Activated naive CD4-positive, alpha-beta T cell treated with anti-CD3 and anti-CD28 coated beads for 36 hours (primary cell): ENCODE measurements at regions of chr10 and their contacts with region 1.

Region 1: GRCh38 chr10:26464632-26465280 is 26.6 kb downstream of the APBB1IP start:
- DNase-seq: no peak
- H3K4me3 Mint-ChIP-seq: no peak overlapping the region
- H3K27ac Mint-ChIP-seq: peak overlapping the region; percentile 69
- H3K4me1 Mint-ChIP-seq: peaks cover 74% of the 10 kb centered on the region
- H3K27me3 Mint-ChIP-seq: no peaks in the 10 kb centered on the region

Region 2: DNA sequence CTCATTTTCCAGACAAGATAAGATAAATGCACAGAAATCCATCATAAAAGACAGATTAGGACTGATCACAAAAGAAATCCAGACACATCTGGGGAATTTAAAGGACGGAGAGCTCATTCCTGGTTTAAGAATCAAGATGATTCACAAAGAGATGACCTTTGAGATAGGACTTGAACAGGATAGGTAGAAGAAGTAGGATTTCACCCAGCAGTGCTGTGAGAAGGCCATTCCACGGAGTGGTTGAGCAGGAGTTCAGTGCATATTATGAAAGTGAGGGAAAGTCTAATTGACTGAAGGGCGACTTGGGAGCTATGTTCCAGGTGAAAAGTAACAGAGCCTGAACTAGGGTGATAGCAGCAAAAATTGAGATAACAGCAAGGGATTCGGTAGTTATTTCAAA is 174.5 kb before region 1 on chr10:
- CTCF ChIA-PET with region 1: no interaction called
- intact Hi-C with region 1: no loop called
- DNase-seq: no peak
- H3K4me3 Mint-ChIP-seq: no peak overlapping the region
- H3K27ac Mint-ChIP-seq: no peak overlapping the region
- H3K4me1 Mint-ChIP-seq: no peaks in the 10 kb centered on the region
- H3K27me3 Mint-ChIP-seq: peaks cover 2% of the 10 kb centered on the region

Region 3: DNA sequence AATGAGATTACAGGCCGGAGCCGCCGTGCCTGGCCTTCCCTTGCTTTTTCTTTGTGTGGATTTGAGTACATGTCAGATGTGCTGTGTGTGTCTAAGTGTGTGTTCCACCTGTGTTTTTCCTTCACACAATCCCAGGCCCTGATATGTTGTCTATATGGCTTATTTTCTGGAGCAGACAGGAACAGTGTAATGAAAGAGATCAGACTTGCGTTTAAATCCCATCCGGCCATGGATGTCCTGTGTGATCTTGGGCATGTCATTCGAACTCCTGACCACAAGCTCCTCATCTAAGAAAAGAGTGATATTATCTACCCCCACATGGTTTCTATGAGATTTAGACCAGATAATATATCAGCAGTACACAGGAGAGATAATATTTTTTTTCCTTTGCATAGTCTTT is 10.6 kb after region 1 on chr10:
- CTCF ChIA-PET with region 1: interaction called, 5 read pairs
- intact Hi-C with region 1: loop called (anchors 1 kb)
- DNase-seq: no peak
- H3K4me3 Mint-ChIP-seq: peak overlapping the region; percentile 30
- H3K27ac Mint-ChIP-seq: peak overlapping the region; percentile 89
- H3K4me1 Mint-ChIP-seq: peaks cover 76% of the 10 kb centered on the region
- H3K27me3 Mint-ChIP-seq: no peaks in the 10 kb centered on the region

Region 4: DNA sequence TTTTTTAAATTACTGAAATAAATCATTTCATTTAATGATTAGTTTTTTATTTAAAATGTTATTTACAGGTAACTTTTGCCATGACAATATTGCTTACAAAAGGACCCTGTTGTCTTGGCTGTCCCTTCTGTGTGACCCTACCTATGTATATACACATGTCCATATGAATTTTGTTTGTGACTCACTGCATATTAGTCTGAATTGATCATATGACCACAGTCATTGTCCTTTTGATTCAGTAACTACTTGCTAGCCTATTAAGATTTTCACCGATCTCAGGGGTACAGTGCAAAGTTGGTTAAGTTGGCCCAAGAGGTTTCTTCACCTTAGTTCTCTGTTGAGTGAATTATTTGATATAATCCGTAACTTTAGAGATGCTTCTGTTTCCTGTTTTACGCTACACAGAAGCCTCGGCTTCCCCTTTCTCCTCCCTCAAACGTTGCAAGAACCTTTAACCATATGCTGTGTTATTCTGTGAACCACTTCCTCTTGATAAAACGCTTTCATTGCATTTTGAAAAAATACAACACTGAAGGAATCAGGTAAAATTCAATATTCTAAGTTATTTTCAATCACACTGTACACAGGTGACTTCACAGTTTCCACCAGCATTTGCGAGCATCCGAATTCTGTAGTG is 17.3 kb after region 1 on chr10:
- CTCF ChIA-PET with region 1: interaction called, 5 read pairs
- intact Hi-C with region 1: loop called (anchors 1 kb)
- DNase-seq: peak; percentile 48
- H3K4me3 Mint-ChIP-seq: peak overlapping the region; percentile 69
- H3K27ac Mint-ChIP-seq: peak overlapping the region; percentile 92
- H3K4me1 Mint-ChIP-seq: peaks cover 75% of the 10 kb centered on the region
- H3K27me3 Mint-ChIP-seq: no peaks in the 10 kb centered on the region

Region 5: GRCh38 chr10:26776258-26776657 is 311.5 kb after region 1 on chr10:
- CTCF ChIA-PET with region 1: no interaction called
- intact Hi-C with region 1: no loop called
- DNase-seq: no peak
- H3K4me3 Mint-ChIP-seq: no peak overlapping the region
- H3K27ac Mint-ChIP-seq: no peak overlapping the region
- H3K4me1 Mint-ChIP-seq: peaks cover 61% of the 10 kb centered on the region
- H3K27me3 Mint-ChIP-seq: no peaks in the 10 kb centered on the region